Naive thymus-derived CD4-positive, alpha-beta T cell (primary cell): ENCODE measurements at regions of chr7 and their contacts with region 1.

Region 1: GRCh38 chr7:152370297-152370696 is 65.5 kb downstream of the KMT2C start:
- DNase-seq: no peak
- ATAC-seq: no peak
- H3K4me3 ChIP-seq: no peak overlapping the region
- H3K4me3 Mint-ChIP-seq: peak overlapping the region in 4 of 10 donors; percentile 11 to 28 (median 26)
- H3K27ac ChIP-seq: no peak overlapping the region
- H3K27ac Mint-ChIP-seq: peak overlapping the region in 5 of 9 donors; percentile 2 to 67 (median 36)
- H3K4me1 ChIP-seq: peaks cover 5 to 7% of the 10 kb centered on the region in 2 donors
- H3K4me1 Mint-ChIP-seq: peaks cover 17 to 89% (median 69%) of the 10 kb centered on the region in 7 donors
- H3K27me3 ChIP-seq: no peaks in the 10 kb centered on the region
- H3K27me3 Mint-ChIP-seq: no peaks in the 10 kb centered on the region

Region 2: GRCh38 chr7:152383341-152384234 is 13.3 kb after region 1 on chr7:
- CTCF ChIA-PET with region 1: no interaction called
- POLR2A ChIA-PET with region 1: no interaction called
- intact Hi-C with region 1: no loop called
- DNase-seq: no peak
- ATAC-seq: peak; percentile 53
- H3K4me3 ChIP-seq: no peak overlapping the region
- H3K4me3 Mint-ChIP-seq: no peak overlapping the region
- H3K27ac ChIP-seq: no peak overlapping the region
- H3K27ac Mint-ChIP-seq: no peak overlapping the region
- H3K4me1 ChIP-seq: no peaks in the 10 kb centered on the region
- H3K4me1 Mint-ChIP-seq: peaks cover 4 to 37% (median 23%) of the 10 kb centered on the region in 7 donors
- H3K27me3 ChIP-seq: no peaks in the 10 kb centered on the region
- H3K27me3 Mint-ChIP-seq: no peaks in the 10 kb centered on the region

Region 3: DNA sequence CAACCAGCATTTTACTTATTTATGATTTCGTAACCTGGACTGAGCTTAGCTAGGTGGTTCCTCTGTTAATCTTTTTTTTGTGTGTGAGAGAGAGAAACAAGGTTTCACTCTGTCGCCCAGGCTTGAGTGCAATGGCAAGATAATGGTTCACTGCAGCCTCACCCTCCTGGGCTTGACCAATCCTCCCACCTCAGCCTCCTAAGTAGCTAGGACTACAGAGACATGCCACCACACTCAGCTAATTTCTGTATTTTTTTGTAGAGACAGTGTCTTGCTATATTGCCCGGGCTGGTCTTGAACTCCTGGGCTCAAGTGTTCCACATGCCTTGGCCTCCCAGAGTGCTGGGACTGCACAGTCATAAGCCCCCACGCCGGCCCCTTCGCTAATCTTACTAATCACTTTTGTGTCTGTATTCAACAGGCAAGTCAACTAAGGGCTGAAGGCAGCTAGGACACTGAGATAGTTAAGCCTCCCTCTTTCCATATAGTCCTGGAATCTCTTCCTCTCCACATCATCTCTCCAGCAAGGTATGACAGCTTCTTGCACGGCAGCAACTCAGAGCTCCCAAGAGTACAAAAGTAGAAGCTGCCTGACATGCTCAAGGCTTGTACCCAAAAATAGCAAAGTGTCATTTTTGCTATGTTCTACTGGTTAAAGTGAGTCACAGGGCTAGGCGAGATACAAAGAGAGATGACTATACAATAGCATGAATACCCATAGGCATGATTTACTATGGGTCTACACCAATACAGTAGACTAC is 54.2 kb after region 1 on chr7:
- CTCF ChIA-PET with region 1: no interaction called
- POLR2A ChIA-PET with region 1: interaction called, 3 read pairs
- intact Hi-C with region 1: loop called in 1 of 2 experiments (anchors 10 kb)
- DNase-seq: no peak
- ATAC-seq: no peak
- H3K4me3 ChIP-seq: no peak overlapping the region
- H3K4me3 Mint-ChIP-seq: peak overlapping the region in 4 of 10 donors; percentile 15 to 56 (median 54)
- H3K27ac ChIP-seq: no peak overlapping the region
- H3K27ac Mint-ChIP-seq: peak overlapping the region in 4 of 9 donors; percentile 10 to 53 (median 43)
- H3K4me1 ChIP-seq: peaks cover 7 to 22% of the 10 kb centered on the region in 2 donors
- H3K4me1 Mint-ChIP-seq: peaks cover 45 to 80% (median 75%) of the 10 kb centered on the region in 7 donors
- H3K27me3 ChIP-seq: no peaks in the 10 kb centered on the region
- H3K27me3 Mint-ChIP-seq: no peaks in the 10 kb centered on the region

Region 4: GRCh38 chr7:153103219-153103618 is 732.9 kb after region 1 on chr7:
- CTCF ChIA-PET with region 1: no interaction called
- POLR2A ChIA-PET with region 1: no interaction called
- intact Hi-C with region 1: no loop called
- DNase-seq: no peak
- ATAC-seq: no peak
- H3K4me3 ChIP-seq: no peak overlapping the region
- H3K4me3 Mint-ChIP-seq: no peak overlapping the region
- H3K27ac ChIP-seq: no peak overlapping the region
- H3K27ac Mint-ChIP-seq: no peak overlapping the region
- H3K4me1 ChIP-seq: no peaks in the 10 kb centered on the region
- H3K4me1 Mint-ChIP-seq: no peaks in the 10 kb centered on the region
- H3K27me3 ChIP-seq: no peaks in the 10 kb centered on the region
- H3K27me3 Mint-ChIP-seq: peaks cover 0 to 10% (median 8%) of the 10 kb centered on the region in 5 donors